Breast epithelium (tissue), 4 donors: ENCODE measurements at regions of chr1 and their contacts with region 1.

Region 1: DNA sequence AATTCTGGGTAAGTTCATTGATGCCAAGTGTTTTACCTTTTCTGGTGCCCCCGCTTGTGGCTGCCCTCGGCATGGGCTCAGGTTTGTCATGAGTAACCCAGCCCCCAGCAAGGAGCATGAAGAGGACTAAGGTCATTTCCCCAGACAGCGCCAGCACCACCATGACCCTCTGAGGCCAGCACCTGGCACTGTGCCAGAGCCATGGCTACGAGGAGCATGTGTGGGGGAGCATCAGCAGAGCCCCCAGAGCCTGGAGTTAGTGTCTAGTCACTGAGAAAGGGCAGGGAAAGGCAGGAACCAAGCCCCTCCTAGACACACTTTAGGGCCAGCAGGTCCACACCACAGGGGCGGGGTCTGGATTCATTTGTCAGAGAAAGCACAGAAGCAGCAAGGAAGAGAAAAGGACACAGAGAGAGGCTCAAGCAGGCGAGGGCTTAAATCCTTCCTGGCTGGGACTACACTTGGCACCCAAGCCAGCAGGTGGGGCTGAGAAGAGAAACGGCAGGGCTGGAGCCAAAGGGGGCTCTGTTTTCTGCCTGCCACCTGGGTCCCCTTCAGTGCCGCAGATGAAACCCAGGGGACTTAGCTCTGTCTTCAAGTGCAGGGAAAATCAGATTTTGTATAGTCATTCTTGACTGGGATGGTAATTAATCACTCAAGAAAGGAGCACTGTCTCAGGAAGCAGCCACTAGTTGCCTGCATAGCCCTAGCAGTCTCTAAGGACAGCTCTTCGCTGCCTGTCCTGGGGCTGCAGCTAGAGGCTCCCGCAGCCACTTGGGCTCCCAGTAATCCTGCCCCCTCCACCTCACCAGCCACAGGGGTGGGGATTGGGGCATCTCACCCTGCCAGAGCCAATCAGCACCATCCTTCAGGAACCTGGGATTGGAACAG is 79.6 kb upstream of the ZC3H12A start:
- DNase-seq: no peak
- H3K4me3 ChIP-seq: no peak overlapping the region
- H3K27ac ChIP-seq: no peak overlapping the region
- H3K4me1 ChIP-seq: no peaks in the 10 kb centered on the region
- H3K27me3 ChIP-seq: peaks cover 0 to 5% of the 10 kb centered on the region in 2 donors
- CTCF ChIP-seq: no peak
- POLR2A ChIP-seq: no peak

Region 2: DNA sequence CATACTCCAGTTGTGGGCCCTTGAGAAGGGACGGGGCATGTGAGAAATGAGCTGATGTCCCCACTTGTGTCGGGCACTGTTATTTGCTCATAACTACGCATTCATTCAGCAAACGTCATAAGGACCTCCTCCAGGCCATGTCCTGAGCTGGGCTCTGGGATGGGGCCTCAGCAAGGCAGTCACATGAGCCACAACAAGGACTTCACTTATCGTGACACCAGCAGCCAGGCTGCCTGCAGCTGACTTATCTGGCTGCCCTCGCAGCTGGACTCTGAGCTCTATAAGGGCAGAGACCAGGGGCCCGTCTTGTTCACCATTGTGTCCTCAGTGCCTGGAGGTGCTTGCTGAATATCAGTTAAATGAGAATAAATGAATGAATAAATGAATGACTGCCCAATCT is 323.0 kb before region 1 on chr1:
- intact Hi-C with region 1: loop called (anchors 5 kb)
- DNase-seq: no peak
- H3K4me3 ChIP-seq: no peak overlapping the region
- H3K27ac ChIP-seq: no peak overlapping the region
- H3K4me1 ChIP-seq: no peaks in the 10 kb centered on the region
- H3K27me3 ChIP-seq: peaks cover 0 to 18% of the 10 kb centered on the region in 2 donors
- CTCF ChIP-seq: no peak
- POLR2A ChIP-seq: no peak